Calu3 (cell line): ENCODE measurements at regions of chr16 and their contacts with region 1.

Region 1: GRCh38 chr16:55944377-55944802 is 69.2 kb upstream of the CES5A start:
- DNase-seq: peak; percentile 74
- H3K4me3 Mint-ChIP-seq: no peak overlapping the region
- H3K27ac Mint-ChIP-seq: no peak overlapping the region
- H3K4me1 Mint-ChIP-seq: peaks cover 8% of the 10 kb centered on the region
- H3K27me3 Mint-ChIP-seq: peaks cover 34% of the 10 kb centered on the region
- CTCF ChIP-seq: peak; percentile 93

Region 2: DNA sequence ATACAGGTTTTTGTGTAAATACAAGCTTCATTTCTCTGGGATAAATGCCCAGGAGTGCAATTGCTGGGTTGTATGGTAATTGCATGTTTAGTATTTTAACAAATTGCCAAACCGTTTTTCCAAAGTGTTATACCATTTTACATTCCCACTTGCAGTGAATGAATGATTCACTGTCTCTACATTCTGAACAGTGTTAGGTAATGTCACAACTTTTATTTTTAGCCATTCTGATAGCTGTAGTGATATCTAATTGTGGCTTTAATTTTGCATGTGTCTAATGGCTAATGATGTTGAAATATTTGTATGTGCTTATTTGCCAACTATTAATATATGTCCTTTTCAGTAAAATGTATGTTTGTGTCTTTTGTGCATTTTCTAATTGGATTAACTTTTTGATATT is 87.7 kb after region 1 on chr16:
- CTCF ChIA-PET with region 1: no interaction called
- intact Hi-C with region 1: loop called (anchors 5 kb)
- DNase-seq: no peak
- H3K4me3 Mint-ChIP-seq: no peak overlapping the region
- H3K27ac Mint-ChIP-seq: no peak overlapping the region
- H3K4me1 Mint-ChIP-seq: no peaks in the 10 kb centered on the region
- H3K27me3 Mint-ChIP-seq: peaks cover 53% of the 10 kb centered on the region
- CTCF ChIP-seq: no peak

Region 3: DNA sequence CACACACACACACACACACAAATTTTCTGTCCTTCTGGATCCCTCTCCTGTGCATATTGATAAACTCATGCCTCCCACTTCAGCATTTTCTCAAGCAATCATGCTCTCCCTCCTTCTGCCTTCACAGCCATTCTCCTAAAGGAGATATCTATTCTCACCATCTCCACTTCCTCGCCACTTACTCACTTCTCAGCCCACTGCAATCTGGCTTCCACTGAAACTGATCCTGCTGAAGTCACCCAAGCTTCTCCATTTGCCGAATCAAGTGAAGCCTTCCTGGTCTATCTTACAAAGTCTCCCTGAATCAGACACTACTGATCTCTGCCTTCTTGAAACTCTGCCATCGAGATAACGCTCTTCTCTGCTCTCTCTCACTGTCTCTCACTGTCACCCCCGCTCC is 192.9 kb after region 1 on chr16:
- CTCF ChIA-PET with region 1: no interaction called
- intact Hi-C with region 1: loop called (anchors 10 kb)
- DNase-seq: no peak
- H3K4me3 Mint-ChIP-seq: no peak overlapping the region
- H3K27ac Mint-ChIP-seq: no peak overlapping the region
- H3K4me1 Mint-ChIP-seq: peaks cover 9% of the 10 kb centered on the region
- H3K27me3 Mint-ChIP-seq: peaks cover 18% of the 10 kb centered on the region
- CTCF ChIP-seq: no peak